ENCODE measurements at regions of chr1 and their contacts with region 1.

Region 1: DNA sequence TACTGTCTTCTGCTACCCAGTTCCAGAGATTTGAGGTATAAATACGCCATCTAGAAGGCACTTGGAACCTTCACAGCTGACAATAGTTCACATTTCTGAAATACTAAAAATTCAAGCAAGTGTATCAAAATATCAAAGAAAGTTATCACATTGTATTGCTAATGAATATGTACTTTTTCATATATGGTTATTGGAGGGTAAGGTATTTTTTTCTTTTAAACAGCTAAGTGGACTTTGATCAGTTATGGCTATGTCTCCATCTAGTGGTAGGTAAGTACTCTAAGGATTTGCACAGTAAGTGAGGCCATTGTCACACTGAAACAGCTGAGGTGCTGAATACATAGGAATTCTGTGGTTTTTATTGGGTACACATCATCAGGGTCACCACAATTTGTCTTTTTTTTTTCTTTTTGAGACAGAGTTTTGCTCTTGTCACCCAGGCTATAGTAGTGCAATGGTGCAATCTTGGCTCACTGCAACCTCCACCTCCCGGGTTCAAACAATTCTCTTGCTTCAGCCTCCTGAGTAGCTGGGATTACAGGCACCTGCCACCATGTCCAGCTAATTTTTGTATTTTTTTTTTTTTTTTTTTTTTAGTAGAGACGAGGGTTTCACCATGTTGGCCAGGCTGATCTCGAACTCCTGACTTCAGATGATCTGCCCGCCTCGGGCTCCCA is 49.1 kb upstream of the CR2 start:
- DNase-seq: peak; percentile 36
- H3K4me3 ChIP-seq: no peak overlapping the region
- H3K27ac ChIP-seq: no peak overlapping the region
- H3K27me3 ChIP-seq: no peaks in the 10 kb centered on the region
- CTCF ChIP-seq: peak; percentile 62

Region 2: DNA sequence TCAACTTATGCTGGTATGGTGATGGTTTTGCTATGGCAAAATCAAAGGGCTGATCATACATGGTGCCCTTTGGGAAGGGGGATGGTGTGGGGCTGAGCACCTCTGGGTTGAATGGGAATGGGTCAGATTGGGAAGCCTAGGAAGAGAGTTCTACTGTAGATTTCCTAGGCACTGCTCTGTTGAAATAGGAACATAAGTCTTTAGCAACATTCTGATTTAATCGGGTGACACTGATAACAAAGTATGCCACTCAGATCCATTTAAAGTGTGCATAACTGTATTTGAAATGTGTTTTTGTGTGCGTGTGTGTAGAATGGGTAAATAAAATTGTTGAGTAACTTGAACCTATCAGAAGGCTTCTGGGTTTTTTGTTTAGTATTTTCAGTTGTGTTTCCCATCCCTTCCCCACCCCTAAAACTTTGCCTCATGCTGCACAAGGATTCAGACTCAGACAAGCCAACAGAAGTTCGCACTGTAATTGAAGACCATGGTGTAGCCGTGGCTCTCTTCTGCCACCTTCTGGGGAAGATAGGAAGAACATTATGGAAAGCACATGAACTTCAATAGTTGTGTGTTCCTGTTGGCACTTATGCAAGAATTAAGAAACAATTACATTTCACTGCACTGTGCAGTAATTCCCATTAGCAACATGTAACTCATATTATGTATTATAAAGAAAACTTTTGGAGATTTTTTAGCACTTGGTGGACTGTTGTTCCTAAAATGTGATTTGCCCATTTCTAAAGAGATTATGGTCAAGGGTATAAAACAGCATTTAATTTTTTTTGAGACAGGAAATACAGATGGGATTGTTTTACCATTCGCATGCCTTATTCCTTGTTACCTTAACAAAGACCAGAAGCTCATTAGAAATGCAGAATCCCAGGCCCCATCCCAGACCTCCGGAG is 327.3 kb before region 1 on chr1:
- in situ Hi-C with region 1: loop called (anchors 25 kb)
- DNase-seq: peak; percentile 81
- H3K4me3 ChIP-seq: no peak overlapping the region
- H3K27ac ChIP-seq: no peak overlapping the region
- H3K27me3 ChIP-seq: no peaks in the 10 kb centered on the region
- CTCF ChIP-seq: peak; percentile 93

Region 3: DNA sequence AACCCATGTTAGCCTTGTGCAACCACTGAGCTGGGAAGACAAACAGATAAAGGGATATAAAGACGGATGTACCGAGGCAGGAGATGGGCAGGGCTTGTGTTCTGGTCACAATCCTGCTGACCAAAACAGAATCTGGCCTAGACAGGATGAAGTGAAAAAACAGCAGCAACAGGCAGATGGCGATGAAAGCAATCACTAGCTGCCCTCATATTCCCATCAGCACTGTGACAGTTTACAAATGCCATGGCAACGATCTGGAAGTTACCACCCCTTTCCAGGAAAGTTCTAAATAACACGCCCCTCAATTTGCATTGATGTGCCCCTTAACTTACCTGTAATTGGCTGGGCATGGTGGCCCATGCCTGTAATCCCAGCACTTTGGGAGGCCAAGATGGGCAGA is 306.3 kb after region 1 on chr1:
- in situ Hi-C with region 1: no loop called
- DNase-seq: peak; percentile 12
- H3K4me3 ChIP-seq: no peak overlapping the region
- H3K27ac ChIP-seq: no peak overlapping the region
- H3K27me3 ChIP-seq: no peaks in the 10 kb centered on the region
- CTCF ChIP-seq: no peak